ENCODE measurements at regions of chr9 and their contacts with region 1.

Region 1: DNA sequence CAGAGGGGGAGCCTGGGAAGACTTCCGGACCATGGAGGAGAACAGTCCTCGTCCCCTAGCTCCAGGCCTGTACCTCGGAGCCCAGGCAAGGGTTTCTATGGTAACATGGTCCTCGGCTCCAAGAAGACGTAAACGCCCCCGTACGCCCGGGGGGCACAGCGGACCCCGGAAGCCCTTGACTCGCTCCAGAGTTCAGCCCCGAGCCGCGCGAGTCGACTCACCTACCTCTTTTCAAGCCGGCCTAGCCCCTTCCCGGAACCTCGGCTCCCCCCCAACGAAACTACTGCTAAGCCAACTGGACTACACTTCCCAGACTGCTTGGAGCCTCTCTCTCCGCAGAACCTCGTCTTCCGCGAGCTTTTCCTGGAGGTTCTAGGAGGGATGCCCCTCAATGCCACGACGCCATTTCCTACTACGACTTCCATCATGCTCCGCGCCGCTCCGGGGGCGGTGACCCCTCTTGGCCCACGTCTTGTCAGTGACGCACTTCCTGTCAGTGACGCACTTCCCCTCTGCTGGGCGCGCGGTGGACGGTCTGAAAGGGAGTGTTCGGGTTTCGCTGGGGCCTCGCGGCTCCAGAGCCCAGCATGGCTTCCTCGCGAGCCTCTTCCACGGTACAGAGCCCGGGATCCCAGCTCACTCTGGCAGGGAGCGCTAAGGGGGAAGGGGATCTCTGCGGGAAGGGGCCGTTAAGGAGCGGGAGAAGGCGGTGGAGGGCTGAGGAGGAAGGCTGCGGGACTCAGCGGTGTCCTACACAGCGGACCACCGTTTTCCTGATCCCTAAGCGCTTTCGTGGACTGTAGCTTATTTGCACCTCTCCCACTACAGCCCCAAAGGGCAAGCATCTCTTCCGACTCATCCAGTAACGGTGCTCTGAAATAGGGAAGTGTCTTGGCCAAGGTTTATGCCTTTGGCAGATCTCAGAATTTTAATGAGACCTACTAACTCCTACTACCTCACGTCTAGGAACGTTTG is at the starts of genes CDC26 and PRPF4:
- DNase-seq: peak; percentile 97
- H3K4me3 Mint-ChIP-seq: no peak within 1 kb of the TSS
- H3K27ac Mint-ChIP-seq: no peak within 1 kb of the TSS
- H3K4me1 Mint-ChIP-seq: peaks cover 14% of the 10 kb centered on the region
- H3K27me3 Mint-ChIP-seq: no peaks in the 10 kb centered on the region
- CTCF ChIP-seq: no peak
- total RNA-seq, gene CDC26: 51.6 and 64.8 TPM in 2 replicates
- total RNA-seq, gene PRPF4: 35.6 and 37.3 TPM in 2 replicates

Region 2: GRCh38 chr9:113221003-113221799 is 54.2 kb before region 1 on chr9 and contains the starts of genes FKBP15 and SLC31A1:
- CTCF ChIA-PET with region 1: interaction called, 29 read pairs
- POLR2A ChIA-PET with region 1: interaction called, 99 read pairs
- intact Hi-C with region 1: loop called (anchors 1 kb)
- DNase-seq: peak; percentile 98
- H3K4me3 Mint-ChIP-seq: peak within 1 kb of the TSS; percentile 97
- H3K27ac Mint-ChIP-seq: peak within 1 kb of the TSS; percentile 96
- H3K4me1 Mint-ChIP-seq: peaks cover 19% of the 10 kb centered on the region
- H3K27me3 Mint-ChIP-seq: no peaks in the 10 kb centered on the region
- CTCF ChIP-seq: no peak
- total RNA-seq, gene FKBP15: 32.2 and 32.6 TPM in 2 replicates
- total RNA-seq, gene SLC31A1: 56.3 and 69.4 TPM in 2 replicates

Region 3: GRCh38 chr9:113289091-113289490 is 13.6 kb after region 1 on chr9:
- CTCF ChIA-PET with region 1: interaction called, 5 read pairs
- POLR2A ChIA-PET with region 1: interaction called, 10 read pairs
- intact Hi-C with region 1: no loop called
- DNase-seq: no peak
- H3K4me3 Mint-ChIP-seq: no peak overlapping the region
- H3K27ac Mint-ChIP-seq: no peak overlapping the region
- H3K4me1 Mint-ChIP-seq: no peaks in the 10 kb centered on the region
- H3K27me3 Mint-ChIP-seq: no peaks in the 10 kb centered on the region
- CTCF ChIP-seq: no peak

Region 4: DNA sequence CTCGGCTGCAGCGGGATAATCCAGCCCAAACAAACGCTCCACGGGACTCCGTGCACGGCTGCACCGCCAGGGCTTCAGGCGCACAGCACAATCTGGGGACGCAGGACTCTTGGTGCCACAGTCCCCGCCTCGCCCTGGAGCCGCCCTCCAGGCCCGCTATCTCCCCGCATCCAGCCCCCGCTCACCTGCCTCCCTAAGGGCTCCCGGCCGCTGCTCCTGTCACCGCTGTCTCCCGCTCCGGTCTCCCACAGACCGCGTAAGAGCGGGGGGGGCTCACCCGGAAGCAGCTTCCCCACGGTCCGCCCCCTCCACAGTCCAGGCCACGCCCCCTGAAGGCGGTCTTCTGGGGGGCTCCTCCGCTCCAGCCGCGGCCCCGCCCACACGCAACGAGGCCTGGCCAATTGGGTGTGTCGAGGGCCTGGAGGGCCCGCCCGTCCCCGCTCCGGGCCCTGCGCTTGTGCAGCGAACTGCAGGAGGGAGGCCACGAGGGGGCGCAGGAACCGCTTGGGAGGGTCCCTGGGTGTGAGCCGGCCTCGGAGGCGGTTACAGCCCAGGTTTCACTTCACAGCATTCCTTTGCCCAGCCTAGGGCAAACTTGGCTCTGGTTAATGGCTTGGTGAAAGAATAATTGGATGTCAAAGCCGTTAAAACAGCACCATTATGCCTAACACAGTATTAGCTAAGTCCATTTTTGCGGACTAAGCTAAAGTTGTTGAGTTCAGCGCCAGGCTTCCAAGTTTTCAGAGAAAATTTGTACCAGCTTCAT is 125.8 kb after region 1 on chr9 and contains the start of gene ALAD:
- CTCF ChIA-PET with region 1: interaction called, 141 read pairs
- POLR2A ChIA-PET with region 1: interaction called, 25 read pairs
- intact Hi-C with region 1: loop called (anchors 1 kb)
- DNase-seq: peak; percentile 98
- H3K4me3 Mint-ChIP-seq: peak within 1 kb of the TSS; percentile 97
- H3K27ac Mint-ChIP-seq: peak within 1 kb of the TSS; percentile 82
- H3K4me1 Mint-ChIP-seq: peaks cover 12% of the 10 kb centered on the region
- H3K27me3 Mint-ChIP-seq: no peaks in the 10 kb centered on the region
- CTCF ChIP-seq: peak; percentile 86
- total RNA-seq, gene ALAD: 6.6 and 7.8 TPM in 2 replicates

Measured in MCF 10A (cell line).